Transverse colon (tissue), 4 donors: ENCODE measurements at regions of chr11 and their contacts with region 1.

Region 1: DNA sequence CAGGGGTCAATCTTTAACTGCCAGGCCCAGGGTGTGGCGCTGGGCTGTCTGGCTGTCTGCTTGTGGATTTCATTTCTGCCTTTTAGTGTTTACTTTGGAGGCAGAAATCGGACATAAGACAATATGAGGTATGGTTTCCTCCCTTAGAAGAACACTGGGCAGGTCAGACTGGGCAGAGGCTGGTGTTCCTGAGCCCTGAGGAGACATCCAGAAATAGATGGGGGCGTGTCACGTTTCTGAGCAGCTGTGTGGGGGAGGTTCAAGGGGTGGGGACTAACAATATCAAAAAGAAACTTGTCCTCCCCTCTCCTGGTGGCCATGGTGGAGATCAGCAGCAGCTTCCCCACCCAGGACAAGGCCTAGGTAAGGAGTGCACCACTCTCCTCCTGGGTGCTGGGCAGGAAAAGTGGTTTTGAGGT is at the start of gene ART1:
- DNase-seq: no peak
- H3K4me3 ChIP-seq: no peak within 1 kb of the TSS
- H3K27ac ChIP-seq: peak within 1 kb of the TSS in 1 of 4 donors; percentile 20
- H3K4me1 ChIP-seq: peaks cover 0 to 49% (median 17%) of the 10 kb centered on the region in 4 donors
- H3K27me3 ChIP-seq: peaks cover 42% of the 10 kb centered on the region
- CTCF ChIP-seq: peak in 1 of 5 experiments; percentile 22
- EP300 ChIP-seq: no peak
- POLR2A ChIP-seq: no peak
- total RNA-seq, gene ART1: 3.3 to 3.7 TPM in 2 of 4 donors, not detected in the others

Region 2: DNA sequence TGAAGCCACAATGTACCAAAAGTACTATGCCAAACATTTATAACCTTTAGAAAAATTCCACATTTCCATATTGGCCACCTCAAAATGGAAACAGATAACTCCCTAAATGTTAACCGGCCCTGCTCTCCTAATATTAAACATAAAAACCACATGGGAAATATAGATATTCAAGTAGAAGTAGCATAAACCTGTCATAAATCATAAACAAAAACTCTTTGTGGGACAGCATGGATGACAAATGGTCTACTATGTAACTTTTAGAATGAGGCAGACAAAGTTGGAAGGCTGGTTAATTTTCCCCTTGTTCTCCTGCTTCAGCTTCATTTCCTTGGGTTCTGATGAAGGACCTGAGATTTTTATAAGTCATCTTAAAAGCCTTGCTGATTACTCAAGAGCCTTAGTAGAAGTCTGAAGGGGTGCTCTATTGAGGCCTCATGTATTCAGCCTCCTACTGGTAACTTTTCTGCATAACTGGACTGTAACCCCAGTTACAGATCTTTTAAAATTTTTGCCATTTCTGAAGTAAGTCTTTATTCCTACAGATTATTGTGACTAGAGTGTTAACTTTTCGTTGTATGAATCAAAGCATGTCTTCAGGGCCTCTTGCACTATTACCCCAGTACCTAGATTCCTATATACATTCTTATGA is 327.1 kb after region 1 on chr11:
- in situ Hi-C with region 1: no loop called
- intact Hi-C with region 1: loop called (anchors 5 kb)
- DNase-seq: no peak
- H3K4me3 ChIP-seq: no peak overlapping the region
- H3K27ac ChIP-seq: no peak overlapping the region
- H3K4me1 ChIP-seq: peaks cover 0 to 11% (median 0%) of the 10 kb centered on the region in 4 donors
- H3K27me3 ChIP-seq: no peaks in the 10 kb centered on the region
- CTCF ChIP-seq: no peak
- EP300 ChIP-seq: no peak
- POLR2A ChIP-seq: no peak